Sigmoid colon (tissue), 7 donors: ENCODE measurements at regions of chr20 and their contacts with region 1.

Region 1: DNA sequence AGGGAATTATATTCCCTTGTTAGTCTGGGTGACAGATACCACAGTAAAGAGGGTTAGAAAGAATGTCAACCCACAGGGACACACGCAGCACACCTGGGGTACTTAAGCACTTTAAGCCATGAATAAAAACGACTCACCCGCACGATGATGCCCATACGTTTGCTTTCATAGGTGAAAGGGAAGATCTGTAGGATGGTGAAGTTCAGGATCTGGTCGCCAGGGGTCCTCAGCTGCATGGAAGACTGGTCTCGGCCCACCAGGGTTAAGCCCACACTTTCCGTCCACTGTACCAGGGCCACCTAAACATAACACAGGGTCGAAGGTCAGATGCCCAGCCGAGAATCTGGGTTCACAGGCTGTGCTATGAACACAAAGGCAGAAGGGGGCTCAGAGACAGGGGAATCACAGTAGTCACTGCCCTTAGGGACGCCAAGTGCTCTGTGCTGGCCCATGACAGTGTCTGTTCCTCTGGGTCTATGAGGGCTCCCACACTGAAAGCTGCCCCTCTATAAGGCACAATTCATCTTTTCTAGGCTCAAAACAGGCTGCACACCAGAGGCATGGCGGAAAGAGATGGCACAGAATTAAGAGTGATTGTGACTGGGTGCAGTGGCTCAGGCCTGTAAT is 96.8 kb upstream of the NFATC2 start:
- DNase-seq: peak; percentile 79
- H3K4me3 ChIP-seq: no peak overlapping the region
- H3K27ac ChIP-seq: no peak overlapping the region
- H3K4me1 ChIP-seq: no peaks in the 10 kb centered on the region
- H3K27me3 ChIP-seq: no peaks in the 10 kb centered on the region
- CTCF ChIP-seq: peak; percentile 77 to 88 (median 78)
- EP300 ChIP-seq: no peak
- POLR2A ChIP-seq: no peak

Region 2: DNA sequence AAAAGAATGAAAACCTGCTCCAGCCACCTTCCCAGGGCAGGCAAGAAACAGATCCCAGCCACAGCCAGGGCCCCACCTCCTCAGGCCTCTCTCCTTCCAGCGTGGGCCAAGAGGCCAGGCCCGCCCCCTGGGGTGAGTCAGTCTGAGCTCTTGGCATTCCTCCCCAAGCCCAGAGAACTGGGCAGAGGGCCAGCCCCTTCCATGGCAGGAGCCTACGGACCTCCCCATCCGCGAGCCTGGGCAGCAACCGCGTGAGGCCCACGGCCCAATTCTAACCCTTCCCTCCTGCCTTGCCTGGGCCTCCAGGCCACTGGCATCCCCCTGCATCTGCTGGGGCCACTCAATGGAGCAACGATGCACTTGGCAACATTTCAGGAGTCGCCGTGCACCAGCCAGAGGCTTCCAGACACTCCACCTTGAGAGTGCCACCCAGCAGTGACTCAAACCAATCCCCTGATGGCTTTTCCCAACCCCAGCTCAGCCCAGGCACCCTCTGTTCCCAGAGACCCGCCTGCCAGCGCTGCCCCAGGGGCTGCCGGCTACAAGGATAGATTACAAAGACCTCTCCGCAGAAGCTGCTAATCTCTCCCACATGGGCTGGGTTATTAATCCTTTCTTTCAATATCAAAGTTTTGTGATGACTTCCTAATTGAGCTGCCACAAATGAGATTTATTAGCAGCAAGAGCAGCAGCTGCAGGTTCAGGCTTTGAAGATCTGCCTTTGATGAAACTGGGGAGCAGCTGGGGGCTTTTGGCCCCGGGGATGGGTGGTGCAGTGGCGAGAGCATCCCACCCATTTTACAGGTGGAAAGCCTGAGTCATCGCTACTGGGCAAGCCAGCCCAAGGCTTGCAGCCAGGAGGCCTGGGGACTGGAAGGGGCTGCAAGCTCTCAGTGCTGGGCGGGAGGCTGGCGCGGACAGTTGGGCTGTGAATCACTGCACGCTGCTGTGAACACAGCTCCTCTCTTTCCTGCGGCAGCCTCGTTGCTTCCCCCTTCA is 182.5 kb before region 1 on chr20:
- intact Hi-C with region 1: no loop called
- DNase-seq: peak; percentile 98
- H3K4me3 ChIP-seq: no peak overlapping the region
- H3K27ac ChIP-seq: peak overlapping the region; percentile 80 to 90 (median 81)
- H3K4me1 ChIP-seq: peaks cover 0 to 26% (median 23%) of the 10 kb centered on the region in 4 donors
- H3K27me3 ChIP-seq: no peaks in the 10 kb centered on the region
- CTCF ChIP-seq: no peak
- EP300 ChIP-seq: no peak
- POLR2A ChIP-seq: no peak

Region 3: DNA sequence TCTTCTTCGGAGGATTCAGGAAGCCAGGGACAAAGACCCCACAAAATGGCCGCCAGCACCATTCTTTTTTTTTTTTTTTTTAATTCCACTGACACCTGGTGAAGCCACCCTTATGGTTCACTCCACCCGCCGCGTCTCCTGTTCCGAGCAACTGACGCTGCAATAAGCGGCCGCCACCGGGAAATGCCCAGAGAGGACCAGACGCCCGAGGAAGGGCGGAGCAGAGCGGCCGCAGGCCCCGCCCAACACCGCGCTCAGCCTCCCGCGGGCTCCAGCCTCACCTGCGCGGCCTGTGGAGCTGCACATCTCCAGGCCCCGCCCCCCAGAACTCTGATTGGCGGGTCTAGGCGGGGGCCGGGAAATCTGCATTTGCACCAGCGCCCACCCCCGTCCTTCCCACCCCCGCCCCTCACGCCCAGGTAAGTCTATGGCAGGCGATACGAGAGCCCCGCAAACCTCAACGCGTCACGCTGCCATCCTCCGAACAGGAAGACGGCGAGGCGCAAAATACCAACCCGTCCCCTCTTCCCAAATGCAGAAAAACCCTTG is 127.8 kb after region 1 on chr20:
- intact Hi-C with region 1: loop called (anchors 10 kb)
- DNase-seq: peak; percentile 85
- H3K4me3 ChIP-seq: peak overlapping the region; percentile 56 to 92 (median 80)
- H3K27ac ChIP-seq: peak overlapping the region; percentile 64 to 75 (median 71)
- H3K4me1 ChIP-seq: peaks cover 0 to 13% (median 9%) of the 10 kb centered on the region in 4 donors
- H3K27me3 ChIP-seq: no peaks in the 10 kb centered on the region
- CTCF ChIP-seq: no peak
- EP300 ChIP-seq: no peak
- POLR2A ChIP-seq: no peak

Region 4: DNA sequence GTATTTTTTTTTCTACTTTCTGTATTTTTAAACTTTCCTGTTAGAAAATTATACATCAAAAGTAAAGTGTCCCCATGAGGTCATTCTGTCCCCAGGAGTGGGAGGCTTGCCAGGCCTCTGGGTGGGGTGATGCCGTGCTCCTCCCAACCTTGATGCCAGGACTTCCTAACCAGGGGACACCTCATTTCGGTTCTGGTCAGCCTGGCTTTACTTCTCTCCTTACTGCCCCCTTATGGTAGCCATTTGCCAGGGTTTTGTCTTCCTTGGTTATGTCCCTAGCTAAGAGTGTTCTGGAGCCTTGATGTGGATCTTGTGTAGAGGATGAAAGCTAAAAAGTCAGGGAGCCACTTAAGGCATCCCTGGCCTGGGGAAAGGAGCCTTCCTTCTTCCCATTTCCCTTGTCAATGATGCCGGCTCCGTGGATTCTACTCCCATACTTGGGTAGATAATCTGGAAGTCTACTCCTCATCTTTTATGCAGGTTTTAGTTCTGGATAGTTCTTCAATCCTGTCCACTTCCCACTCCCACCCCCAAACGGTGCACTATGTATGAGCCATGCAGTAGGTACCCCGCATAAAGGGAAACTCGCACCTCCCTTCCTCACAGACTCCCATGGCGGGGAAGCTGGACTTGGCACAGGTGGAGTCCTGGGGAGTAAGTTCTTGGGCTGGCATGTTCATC is 327.1 kb after region 1 on chr20:
- intact Hi-C with region 1: loop called (anchors 10 kb)
- DNase-seq: peak; percentile 63
- H3K4me3 ChIP-seq: no peak overlapping the region
- H3K27ac ChIP-seq: no peak overlapping the region
- H3K4me1 ChIP-seq: no peaks in the 10 kb centered on the region
- H3K27me3 ChIP-seq: no peaks in the 10 kb centered on the region
- CTCF ChIP-seq: peak in 1 of 4 experiments; percentile 46
- EP300 ChIP-seq: no peak
- POLR2A ChIP-seq: no peak

Region 5: GRCh38 chr20:52083627-52084232 is 444.4 kb after region 1 on chr20:
- intact Hi-C with region 1: loop called (anchors 1 kb)
- DNase-seq: peak; percentile 66
- H3K4me3 ChIP-seq: no peak overlapping the region
- H3K27ac ChIP-seq: no peak overlapping the region
- H3K4me1 ChIP-seq: no peaks in the 10 kb centered on the region
- H3K27me3 ChIP-seq: no peaks in the 10 kb centered on the region
- CTCF ChIP-seq: peak in 3 of 4 experiments; percentile 39 to 42 (median 40)
- EP300 ChIP-seq: no peak
- POLR2A ChIP-seq: no peak